ENCODE measurements at regions of chr3 and their contacts with region 1.

Region 1: DNA sequence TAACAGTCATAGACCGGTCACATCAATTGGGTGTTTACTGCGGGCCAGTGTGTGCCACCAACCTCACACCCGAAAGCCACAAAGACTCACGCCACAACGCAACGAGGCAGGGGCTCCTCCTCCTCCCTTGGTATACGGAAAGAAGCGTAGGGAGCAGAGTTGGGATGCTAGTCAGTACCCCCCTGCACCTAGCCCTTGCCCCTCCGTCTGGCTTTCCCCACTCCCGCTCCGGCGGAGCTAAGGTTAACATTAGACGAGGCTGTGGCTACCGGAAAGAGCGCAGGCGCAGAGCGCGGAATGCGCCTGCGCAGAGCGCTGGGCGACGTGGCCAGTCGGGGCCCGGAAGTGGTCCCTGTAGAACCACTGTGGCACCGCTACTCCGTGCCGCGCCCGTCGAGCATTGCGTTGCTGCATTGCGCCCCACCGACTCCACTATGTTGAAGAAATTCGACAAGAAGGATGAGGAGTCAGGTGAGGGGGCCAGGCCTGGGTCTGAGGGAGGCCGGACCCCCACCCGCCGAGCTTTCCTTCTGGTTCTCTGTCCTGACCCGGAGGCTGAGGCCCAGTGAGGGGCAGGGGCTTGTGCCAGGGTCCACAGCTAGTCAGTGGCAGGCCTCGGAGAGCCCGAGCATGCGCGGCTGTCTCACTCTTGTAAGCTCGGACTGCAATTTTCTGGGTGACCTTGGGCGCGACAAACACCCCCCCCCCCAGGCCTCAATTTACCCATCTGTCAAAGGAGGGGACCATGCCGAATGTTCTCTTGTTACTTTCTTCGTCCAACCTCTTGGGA is at the start of gene COPG1:
- DNase-seq: peak; percentile 92
- H3K4me3 ChIP-seq: peak within 1 kb of the TSS; percentile 83 to 87 (median 86)
- H3K27ac ChIP-seq: peak within 1 kb of the TSS; percentile 78 to 90 (median 84)
- H3K4me1 ChIP-seq: peaks cover 0 to 49% (median 39%) of the 10 kb centered on the region in 4 donors
- H3K27me3 ChIP-seq: no peaks in the 10 kb centered on the region
- CTCF ChIP-seq: no peak
- EP300 ChIP-seq: peak in 1 of 4 donors; percentile 7
- POLR2A ChIP-seq: peak; percentile 93 to 94
- total RNA-seq, gene COPG1: 50.9 to 78.1 (median 57.9) TPM

Region 2: GRCh38 chr3:128969993-128970739 is 279.3 kb before region 1 on chr3:
- intact Hi-C with region 1: loop called (anchors 5 kb)
- DNase-seq: no peak
- H3K4me3 ChIP-seq: no peak overlapping the region
- H3K27ac ChIP-seq: no peak overlapping the region
- H3K4me1 ChIP-seq: peaks cover 0 to 25% (median 9%) of the 10 kb centered on the region in 4 donors
- H3K27me3 ChIP-seq: no peaks in the 10 kb centered on the region
- CTCF ChIP-seq: peak; percentile 68 to 90 (median 78)
- EP300 ChIP-seq: no peak
- POLR2A ChIP-seq: no peak

Region 3: DNA sequence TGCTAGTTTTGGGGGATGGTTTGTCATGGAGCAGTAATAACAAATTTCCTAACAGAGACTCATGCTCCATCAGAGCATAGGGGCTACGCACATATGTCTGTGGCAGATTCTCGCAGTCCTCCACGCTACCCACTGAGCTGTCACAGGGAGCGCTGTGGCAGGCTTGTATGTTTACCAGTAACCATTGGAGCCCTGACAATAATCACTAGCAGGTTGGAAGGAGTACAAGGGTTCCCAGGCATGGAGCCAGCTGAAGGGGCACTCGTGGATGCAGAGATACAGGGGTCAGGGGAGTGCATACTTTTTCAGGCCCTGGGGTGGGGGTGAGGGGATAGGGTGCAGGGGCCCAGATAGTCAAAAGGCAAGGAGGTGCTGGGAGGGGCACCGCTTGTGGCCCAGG is 196.8 kb before region 1 on chr3:
- intact Hi-C with region 1: loop called (anchors 5 kb)
- DNase-seq: no peak
- H3K4me3 ChIP-seq: no peak overlapping the region
- H3K27ac ChIP-seq: peak overlapping the region; percentile 60 to 73 (median 66)
- H3K4me1 ChIP-seq: peaks cover 0 to 23% (median 17%) of the 10 kb centered on the region in 4 donors
- H3K27me3 ChIP-seq: no peaks in the 10 kb centered on the region
- CTCF ChIP-seq: no peak
- EP300 ChIP-seq: no peak
- POLR2A ChIP-seq: no peak

Region 4: GRCh38 chr3:129120254-129121004 is 129.0 kb before region 1 on chr3:
- intact Hi-C with region 1: loop called (anchors 5 kb)
- DNase-seq: peak; percentile 94
- H3K4me3 ChIP-seq: peak overlapping the region; percentile 67 to 93 (median 72)
- H3K27ac ChIP-seq: peak overlapping the region; percentile 87 to 94 (median 94)
- H3K4me1 ChIP-seq: peaks cover 0 to 38% (median 33%) of the 10 kb centered on the region in 4 donors
- H3K27me3 ChIP-seq: no peaks in the 10 kb centered on the region
- CTCF ChIP-seq: peak in 1 of 4 experiments; percentile 21
- EP300 ChIP-seq: no peak
- POLR2A ChIP-seq: peak in 1 of 2 donors; percentile 54

Region 5: GRCh38 chr3:129160891-129161859 is 88.3 kb before region 1 on chr3 and contains the start of gene ISY1:
- intact Hi-C with region 1: loop called (anchors 1 kb)
- DNase-seq: peak; percentile 94
- H3K4me3 ChIP-seq: peak within 1 kb of the TSS; percentile 78 to 86 (median 82)
- H3K27ac ChIP-seq: peak within 1 kb of the TSS; percentile 92 to 94 (median 94)
- H3K4me1 ChIP-seq: peaks cover 0 to 29% (median 23%) of the 10 kb centered on the region in 4 donors
- H3K27me3 ChIP-seq: no peaks in the 10 kb centered on the region
- CTCF ChIP-seq: peak; percentile 44 to 78 (median 53)
- EP300 ChIP-seq: peak in 1 of 4 donors; percentile 16
- POLR2A ChIP-seq: peak; percentile 80 to 83
- total RNA-seq, gene ISY1: 18.0 to 26.0 (median 22.5) TPM

Region 6: GRCh38 chr3:129183569-129184395 is 65.7 kb before region 1 on chr3 and contains the start of gene CNBP:
- intact Hi-C with region 1: loop called (anchors 1 kb)
- DNase-seq: peak; percentile 96
- H3K4me3 ChIP-seq: peak within 1 kb of the TSS; percentile 82 to 97 (median 92)
- H3K27ac ChIP-seq: peak within 1 kb of the TSS; percentile 99
- H3K4me1 ChIP-seq: peaks cover 0 to 58% (median 46%) of the 10 kb centered on the region in 4 donors
- H3K27me3 ChIP-seq: no peaks in the 10 kb centered on the region
- CTCF ChIP-seq: no peak
- EP300 ChIP-seq: peak in 1 of 4 donors; percentile 9
- POLR2A ChIP-seq: peak; percentile 97
- total RNA-seq, gene CNBP: 398 to 687 (median 623) TPM

Measured in sigmoid colon (tissue), 7 donors.